Naive thymus-derived CD4-positive, alpha-beta T cell (primary cell): ENCODE measurements at regions of chr12 and their contacts with region 1.

Region 1: DNA sequence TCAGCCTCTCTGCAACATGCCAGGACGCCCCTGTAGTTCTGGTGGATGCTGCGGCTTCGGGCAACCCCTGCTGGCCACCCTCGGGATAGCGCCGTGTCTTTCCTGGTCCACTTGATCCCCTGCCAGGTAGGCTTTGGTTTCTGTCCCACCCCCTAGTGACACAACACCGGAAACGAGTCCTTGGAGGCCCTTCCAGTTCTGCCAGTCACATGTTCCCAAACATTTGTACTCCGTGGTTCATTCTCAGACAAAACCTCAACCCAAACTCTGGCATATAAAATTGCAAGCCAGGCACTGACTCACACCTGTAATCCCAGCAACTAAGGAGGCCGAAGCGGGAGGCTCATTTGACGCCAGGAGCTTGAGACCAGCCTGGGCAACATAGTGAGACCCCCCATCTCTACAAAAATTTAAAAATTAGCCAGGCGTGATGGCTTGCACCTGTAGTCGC is 37.1 kb downstream of the RASAL1 start:
- DNase-seq: peak; percentile 42 to 70 (median 61)
- ATAC-seq: peak; percentile 83
- H3K4me3 ChIP-seq: no peak overlapping the region
- H3K4me3 Mint-ChIP-seq: no peak overlapping the region
- H3K27ac ChIP-seq: peak overlapping the region; percentile 34
- H3K27ac Mint-ChIP-seq: peak overlapping the region in 8 of 9 donors; percentile 31 to 92 (median 70)
- H3K4me1 ChIP-seq: peaks cover 0 to 18% of the 10 kb centered on the region in 2 donors
- H3K4me1 Mint-ChIP-seq: peaks cover 0 to 43% (median 33%) of the 10 kb centered on the region in 7 donors
- H3K27me3 ChIP-seq: no peaks in the 10 kb centered on the region
- H3K27me3 Mint-ChIP-seq: no peaks in the 10 kb centered on the region

Region 2: GRCh38 chr12:113152835-113153814 is 54.7 kb after region 1 on chr12:
- CTCF ChIA-PET with region 1: no interaction called
- POLR2A ChIA-PET with region 1: no interaction called
- intact Hi-C with region 1: loop called in 1 of 2 experiments (anchors 2 kb)
- DNase-seq: peak; percentile 36 to 86 (median 80)
- ATAC-seq: peak; percentile 94
- H3K4me3 ChIP-seq: peak overlapping the region; percentile 75
- H3K4me3 Mint-ChIP-seq: peak overlapping the region; percentile 76 to 88 (median 86)
- H3K27ac ChIP-seq: no peak overlapping the region
- H3K27ac Mint-ChIP-seq: peak overlapping the region in 6 of 9 donors; percentile 76 to 93 (median 85)
- H3K4me1 ChIP-seq: peaks cover 0 to 19% of the 10 kb centered on the region in 2 donors
- H3K4me1 Mint-ChIP-seq: peaks cover 0 to 27% (median 25%) of the 10 kb centered on the region in 7 donors
- H3K27me3 ChIP-seq: no peaks in the 10 kb centered on the region
- H3K27me3 Mint-ChIP-seq: peaks cover 0 to 36% (median 0%) of the 10 kb centered on the region in 5 donors

Region 3: GRCh38 chr12:113174461-113175384 is 76.3 kb after region 1 on chr12:
- CTCF ChIA-PET with region 1: interaction called, 12 read pairs
- POLR2A ChIA-PET with region 1: no interaction called
- intact Hi-C with region 1: loop called in 1 of 2 experiments (anchors 2 kb)
- DNase-seq: peak; percentile 52 to 84 (median 66)
- ATAC-seq: peak; percentile 92
- H3K4me3 ChIP-seq: no peak overlapping the region
- H3K4me3 Mint-ChIP-seq: no peak overlapping the region
- H3K27ac ChIP-seq: no peak overlapping the region
- H3K27ac Mint-ChIP-seq: peak overlapping the region in 5 of 9 donors; percentile 2 to 77 (median 55)
- H3K4me1 ChIP-seq: no peaks in the 10 kb centered on the region
- H3K4me1 Mint-ChIP-seq: peaks cover 2 to 10% (median 6%) of the 10 kb centered on the region in 7 donors
- H3K27me3 ChIP-seq: no peaks in the 10 kb centered on the region
- H3K27me3 Mint-ChIP-seq: no peaks in the 10 kb centered on the region